MCF 10A (cell line): ENCODE measurements at regions of chr14 and their contacts with region 1.

Region 1: GRCh38 chr14:54338696-54339317 is 58.0 kb upstream of the CDKN3 start:
- DNase-seq: peak; percentile 67
- H3K4me3 Mint-ChIP-seq: no peak overlapping the region
- H3K27ac Mint-ChIP-seq: no peak overlapping the region
- H3K4me1 Mint-ChIP-seq: peaks cover 6% of the 10 kb centered on the region
- H3K27me3 Mint-ChIP-seq: no peaks in the 10 kb centered on the region
- CTCF ChIP-seq: peak; percentile 69

Region 2: DNA sequence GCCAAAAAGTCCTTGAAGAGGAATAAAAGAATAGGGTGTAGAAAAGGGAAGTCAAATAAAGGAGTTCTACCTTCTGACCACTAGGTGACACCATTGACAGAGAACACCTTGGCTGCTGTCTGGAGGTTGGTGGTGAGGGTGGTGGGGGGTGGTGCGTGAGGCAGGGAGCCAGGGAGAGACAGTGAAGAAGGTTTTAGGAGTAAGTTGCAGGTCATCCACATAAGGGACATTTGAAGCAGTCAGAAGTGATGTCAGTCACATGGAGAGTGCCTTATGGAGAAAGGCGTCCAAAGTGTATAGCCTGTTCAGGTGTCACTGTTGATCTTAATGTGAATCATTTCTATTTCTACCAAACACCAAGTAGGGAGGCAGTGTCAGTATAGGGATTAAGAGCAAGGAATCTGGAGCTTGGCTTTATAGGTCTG is 906.4 kb before region 1 on chr14:
- CTCF ChIA-PET with region 1: interaction called, 4 read pairs
- POLR2A ChIA-PET with region 1: no interaction called
- intact Hi-C with region 1: loop called (anchors 1 kb)
- DNase-seq: peak; percentile 56
- H3K4me3 Mint-ChIP-seq: no peak overlapping the region
- H3K27ac Mint-ChIP-seq: no peak overlapping the region
- H3K4me1 Mint-ChIP-seq: no peaks in the 10 kb centered on the region
- H3K27me3 Mint-ChIP-seq: no peaks in the 10 kb centered on the region
- CTCF ChIP-seq: peak; percentile 68

Region 3: GRCh38 chr14:53894456-53894855 is 444.4 kb before region 1 on chr14:
- CTCF ChIA-PET with region 1: no interaction called
- POLR2A ChIA-PET with region 1: no interaction called
- intact Hi-C with region 1: no loop called
- DNase-seq: peak; percentile 20
- H3K4me3 Mint-ChIP-seq: no peak overlapping the region
- H3K27ac Mint-ChIP-seq: no peak overlapping the region
- H3K4me1 Mint-ChIP-seq: peaks cover 16% of the 10 kb centered on the region
- H3K27me3 Mint-ChIP-seq: no peaks in the 10 kb centered on the region
- CTCF ChIP-seq: no peak

Region 4: GRCh38 chr14:53929871-53930715 is 408.7 kb before region 1 on chr14:
- CTCF ChIA-PET with region 1: interaction called, 3 read pairs
- POLR2A ChIA-PET with region 1: no interaction called
- intact Hi-C with region 1: loop called (anchors 2 kb)
- DNase-seq: peak; percentile 48
- H3K4me3 Mint-ChIP-seq: no peak overlapping the region
- H3K27ac Mint-ChIP-seq: no peak overlapping the region
- H3K4me1 Mint-ChIP-seq: peaks cover 15% of the 10 kb centered on the region
- H3K27me3 Mint-ChIP-seq: no peaks in the 10 kb centered on the region
- CTCF ChIP-seq: peak; percentile 44

Region 5: DNA sequence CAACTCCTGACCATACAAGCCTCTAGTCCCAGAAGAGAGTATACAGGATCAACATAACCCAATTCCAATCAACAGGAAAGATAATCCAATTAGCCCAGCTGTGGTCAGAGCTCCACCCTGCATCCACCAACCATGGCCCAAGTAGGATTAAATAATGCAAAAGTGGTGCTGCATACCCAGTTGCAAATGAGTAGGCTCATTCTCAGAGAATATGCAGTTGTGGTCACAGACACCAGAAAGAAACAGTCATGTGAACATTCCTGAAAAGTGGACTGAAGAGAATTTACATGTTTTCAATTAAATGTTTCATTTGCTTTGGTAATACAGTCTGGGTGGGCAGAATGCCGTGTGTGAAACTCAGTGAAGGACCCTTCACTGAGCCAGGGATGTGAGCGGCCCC is 215.0 kb before region 1 on chr14:
- CTCF ChIA-PET with region 1: no interaction called
- POLR2A ChIA-PET with region 1: no interaction called
- intact Hi-C with region 1: no loop called
- DNase-seq: no peak
- H3K4me3 Mint-ChIP-seq: no peak overlapping the region
- H3K27ac Mint-ChIP-seq: no peak overlapping the region
- H3K4me1 Mint-ChIP-seq: peaks cover 13% of the 10 kb centered on the region
- H3K27me3 Mint-ChIP-seq: no peaks in the 10 kb centered on the region
- CTCF ChIP-seq: no peak

Region 6: DNA sequence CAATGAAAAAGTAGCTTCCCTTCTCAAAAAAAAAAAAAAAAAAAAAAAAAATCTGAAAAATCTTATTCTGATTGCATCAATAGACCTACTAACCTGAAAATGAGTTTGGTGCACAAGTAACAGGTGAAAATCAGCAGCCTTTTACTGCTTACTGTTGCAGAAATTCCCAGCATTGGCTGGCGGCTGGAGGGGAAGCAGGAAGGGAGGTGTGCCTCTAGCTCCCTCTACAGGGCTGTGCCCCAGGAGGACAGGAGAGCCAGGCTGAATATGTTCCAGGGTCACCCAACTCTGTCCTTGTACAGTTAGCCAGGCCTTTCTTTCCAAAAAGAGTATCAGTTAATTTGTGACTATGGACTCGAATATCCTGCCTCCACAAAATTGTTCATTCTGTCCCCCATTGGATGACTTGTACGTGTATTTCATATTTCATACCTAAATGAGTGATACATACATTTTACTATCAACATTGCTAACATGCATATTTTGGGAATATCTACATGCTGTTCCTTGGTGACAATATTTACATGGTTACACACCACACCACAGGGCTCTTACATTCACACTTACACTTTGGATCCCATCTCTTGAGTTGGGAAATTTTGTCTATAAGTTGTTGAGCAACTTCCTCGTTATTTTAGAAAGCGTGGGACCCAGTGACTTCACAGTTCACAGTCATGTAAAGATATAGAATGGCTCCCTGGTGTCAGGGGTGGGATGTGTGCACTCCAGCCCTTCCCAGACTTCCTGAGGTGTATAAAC is 352.9 kb after region 1 on chr14:
- CTCF ChIA-PET with region 1: no interaction called
- POLR2A ChIA-PET with region 1: no interaction called
- intact Hi-C with region 1: no loop called
- DNase-seq: peak; percentile 79
- H3K4me3 Mint-ChIP-seq: no peak overlapping the region
- H3K27ac Mint-ChIP-seq: no peak overlapping the region
- H3K4me1 Mint-ChIP-seq: peaks cover 27% of the 10 kb centered on the region
- H3K27me3 Mint-ChIP-seq: no peaks in the 10 kb centered on the region
- CTCF ChIP-seq: peak; percentile 82